CD4-positive, alpha-beta memory T cell (primary cell): ENCODE measurements at regions of chr20 and their contacts with region 1.

Region 1: GRCh38 chr20:31835977-31836852 is 9.2 kb downstream of the FOXS1 start:
- DNase-seq: no peak
- H3K4me3 ChIP-seq: no peak overlapping the region
- H3K4me3 Mint-ChIP-seq: no peak overlapping the region
- H3K27ac ChIP-seq: no peak overlapping the region
- H3K27ac Mint-ChIP-seq: no peak overlapping the region
- H3K4me1 ChIP-seq: peaks cover 8% of the 10 kb centered on the region
- H3K4me1 Mint-ChIP-seq: peaks cover 1 to 9% (median 7%) of the 10 kb centered on the region in 4 donors
- H3K27me3 ChIP-seq: no peaks in the 10 kb centered on the region
- H3K27me3 Mint-ChIP-seq: no peaks in the 10 kb centered on the region

Region 2: DNA sequence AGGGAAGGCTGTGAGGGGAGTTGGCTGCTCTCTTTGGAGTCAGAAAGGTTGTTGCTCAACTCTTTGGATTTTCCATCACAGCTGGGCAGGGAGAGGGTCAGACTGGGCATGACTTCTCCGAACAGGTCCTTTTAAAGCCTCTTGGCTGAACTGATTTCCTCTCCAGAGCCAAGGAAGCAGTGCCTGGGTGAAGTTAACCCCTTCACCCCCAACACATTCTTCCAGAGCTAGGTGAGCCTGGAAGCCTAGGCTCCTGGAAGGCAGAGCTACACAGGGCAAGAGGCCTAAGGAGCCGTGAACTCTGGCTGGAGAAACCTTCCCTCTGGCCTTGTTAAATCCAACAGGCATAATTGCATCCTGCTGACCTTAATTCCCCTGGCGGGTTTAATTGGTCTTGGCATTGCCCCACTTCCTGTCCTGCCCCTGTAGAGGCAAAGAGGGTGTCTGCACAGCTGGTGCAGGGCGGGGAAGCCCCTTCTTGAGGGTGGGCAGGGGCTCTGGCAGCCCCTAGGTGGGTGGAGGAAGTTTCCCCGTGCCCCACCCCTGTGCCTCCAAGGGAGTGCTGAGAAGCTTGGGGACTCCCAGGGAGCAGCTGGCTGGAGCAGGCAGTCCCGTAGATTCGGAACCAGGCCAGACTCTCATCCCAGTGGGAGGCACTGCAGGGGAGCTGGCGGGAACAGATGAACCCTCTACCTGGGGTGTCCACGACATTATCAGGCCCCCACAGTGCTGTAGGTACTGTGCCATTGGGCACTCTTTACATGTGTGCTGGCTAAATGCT is 20.6 kb before region 1 on chr20:
- CTCF ChIA-PET with region 1: no interaction called
- POLR2A ChIA-PET with region 1: no interaction called
- intact Hi-C with region 1: no loop called
- DNase-seq: no peak
- H3K4me3 ChIP-seq: no peak overlapping the region
- H3K4me3 Mint-ChIP-seq: no peak overlapping the region
- H3K27ac ChIP-seq: no peak overlapping the region
- H3K27ac Mint-ChIP-seq: no peak overlapping the region
- H3K4me1 ChIP-seq: no peaks in the 10 kb centered on the region
- H3K4me1 Mint-ChIP-seq: no peaks in the 10 kb centered on the region
- H3K27me3 ChIP-seq: no peaks in the 10 kb centered on the region
- H3K27me3 Mint-ChIP-seq: no peaks in the 10 kb centered on the region

Region 3: GRCh38 chr20:31849455-31849925 is 13.3 kb after region 1 on chr20:
- CTCF ChIA-PET with region 1: interaction called, 13 read pairs
- POLR2A ChIA-PET with region 1: interaction called, 3 read pairs
- intact Hi-C with region 1: no loop called
- DNase-seq: no peak
- H3K4me3 ChIP-seq: no peak overlapping the region
- H3K4me3 Mint-ChIP-seq: no peak overlapping the region
- H3K27ac ChIP-seq: no peak overlapping the region
- H3K27ac Mint-ChIP-seq: no peak overlapping the region
- H3K4me1 ChIP-seq: no peaks in the 10 kb centered on the region
- H3K4me1 Mint-ChIP-seq: no peaks in the 10 kb centered on the region
- H3K27me3 ChIP-seq: no peaks in the 10 kb centered on the region
- H3K27me3 Mint-ChIP-seq: peaks cover 11 to 21% of the 10 kb centered on the region in 2 donors